ENCODE measurements at regions of chr12 and their contacts with region 1.

Region 1: DNA sequence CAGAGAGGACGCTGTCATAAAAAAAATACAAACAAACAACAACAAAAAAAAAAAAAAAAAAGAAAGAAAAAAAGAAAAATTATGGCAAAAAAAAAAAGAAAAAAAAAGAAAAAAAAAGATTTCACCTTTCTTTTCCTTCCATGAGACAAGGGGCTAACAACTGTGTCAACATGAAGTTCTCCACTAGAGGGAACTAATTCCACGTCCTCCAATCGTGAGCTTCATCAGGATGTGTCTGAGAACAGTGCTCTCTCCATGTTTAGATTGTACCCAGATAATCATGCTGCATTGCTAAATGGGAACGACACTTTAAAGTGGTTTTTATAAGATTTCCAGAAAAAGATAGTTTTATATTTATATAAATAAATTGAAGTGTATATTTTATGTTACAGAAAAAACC is 96.2 kb upstream of the PTPRB start:
- DNase-seq: peak; percentile 80
- H3K4me3 Mint-ChIP-seq: no peak overlapping the region
- H3K27ac Mint-ChIP-seq: no peak overlapping the region
- H3K4me1 Mint-ChIP-seq: no peaks in the 10 kb centered on the region
- H3K27me3 Mint-ChIP-seq: no peaks in the 10 kb centered on the region
- CTCF ChIP-seq: peak; percentile 80

Region 2: DNA sequence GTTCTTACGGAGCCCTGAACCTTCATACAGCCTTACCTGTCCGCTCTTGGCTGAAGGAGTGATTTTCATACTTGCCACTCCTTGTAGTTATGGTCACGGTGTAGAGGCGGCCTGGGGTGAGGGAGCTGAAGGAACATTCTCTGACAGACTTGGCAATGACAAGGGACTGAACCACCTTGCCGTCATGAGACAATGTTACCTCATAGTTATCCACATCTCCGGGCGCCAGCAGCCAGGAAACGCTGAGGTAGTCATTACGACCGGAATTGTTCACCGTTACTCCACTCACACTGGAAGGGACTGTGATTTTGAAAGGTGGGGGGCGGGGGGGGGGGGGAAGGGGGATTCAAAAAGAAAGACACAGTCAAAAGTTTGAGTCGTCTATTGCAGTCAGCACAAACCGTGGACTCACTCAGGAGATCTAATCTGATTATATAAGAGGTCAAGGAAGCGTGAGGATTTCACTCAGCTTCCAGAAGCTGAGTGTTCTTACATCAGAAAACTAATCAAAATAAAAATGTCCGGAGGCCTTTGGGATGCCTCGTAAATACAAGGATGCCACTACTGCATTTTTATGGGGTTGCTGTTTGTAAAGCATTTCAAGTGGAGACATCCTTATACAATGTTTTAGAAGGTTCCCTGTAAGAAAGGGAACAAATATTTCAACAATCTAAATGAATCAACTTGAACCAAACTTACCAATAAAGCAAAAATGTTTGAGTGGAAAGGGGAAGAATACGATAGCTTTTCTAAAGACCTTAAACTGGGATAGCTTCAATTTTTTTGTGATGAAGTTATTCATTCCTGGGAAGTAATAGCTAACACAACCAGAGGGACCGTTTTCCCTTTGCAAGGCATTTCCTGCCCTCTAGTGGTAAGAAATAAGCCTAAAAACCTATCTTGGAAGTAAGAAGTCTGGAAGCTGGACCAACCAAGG is 156.8 kb before region 1 on chr12:
- CTCF ChIA-PET with region 1: interaction called, 18 read pairs
- POLR2A ChIA-PET with region 1: no interaction called
- intact Hi-C with region 1: no loop called
- DNase-seq: peak; percentile 81
- H3K4me3 Mint-ChIP-seq: no peak overlapping the region
- H3K27ac Mint-ChIP-seq: no peak overlapping the region
- H3K4me1 Mint-ChIP-seq: no peaks in the 10 kb centered on the region
- H3K27me3 Mint-ChIP-seq: no peaks in the 10 kb centered on the region
- CTCF ChIP-seq: peak; percentile 76

Region 3: DNA sequence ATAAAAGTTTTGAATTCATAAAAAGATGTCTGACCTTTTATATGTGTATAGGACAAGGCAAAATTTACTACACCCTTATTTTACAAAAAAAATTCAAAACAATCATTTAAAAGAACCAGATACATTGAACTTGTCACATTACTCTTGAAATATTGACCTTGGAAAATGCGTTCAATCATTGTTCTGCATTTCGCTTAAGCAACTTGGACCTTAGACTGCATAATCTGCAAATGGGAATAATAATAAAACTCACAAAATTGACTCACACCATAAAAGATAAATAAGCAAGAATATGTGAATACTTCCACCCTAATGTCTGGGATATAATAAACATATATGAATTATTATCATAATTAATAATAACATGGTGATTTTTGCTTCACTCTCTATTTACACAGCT is 26.8 kb before region 1 on chr12:
- CTCF ChIA-PET with region 1: no interaction called
- POLR2A ChIA-PET with region 1: no interaction called
- intact Hi-C with region 1: no loop called
- DNase-seq: no peak
- H3K4me3 Mint-ChIP-seq: no peak overlapping the region
- H3K27ac Mint-ChIP-seq: no peak overlapping the region
- H3K4me1 Mint-ChIP-seq: no peaks in the 10 kb centered on the region
- H3K27me3 Mint-ChIP-seq: peaks cover 18% of the 10 kb centered on the region
- CTCF ChIP-seq: no peak

Region 4: DNA sequence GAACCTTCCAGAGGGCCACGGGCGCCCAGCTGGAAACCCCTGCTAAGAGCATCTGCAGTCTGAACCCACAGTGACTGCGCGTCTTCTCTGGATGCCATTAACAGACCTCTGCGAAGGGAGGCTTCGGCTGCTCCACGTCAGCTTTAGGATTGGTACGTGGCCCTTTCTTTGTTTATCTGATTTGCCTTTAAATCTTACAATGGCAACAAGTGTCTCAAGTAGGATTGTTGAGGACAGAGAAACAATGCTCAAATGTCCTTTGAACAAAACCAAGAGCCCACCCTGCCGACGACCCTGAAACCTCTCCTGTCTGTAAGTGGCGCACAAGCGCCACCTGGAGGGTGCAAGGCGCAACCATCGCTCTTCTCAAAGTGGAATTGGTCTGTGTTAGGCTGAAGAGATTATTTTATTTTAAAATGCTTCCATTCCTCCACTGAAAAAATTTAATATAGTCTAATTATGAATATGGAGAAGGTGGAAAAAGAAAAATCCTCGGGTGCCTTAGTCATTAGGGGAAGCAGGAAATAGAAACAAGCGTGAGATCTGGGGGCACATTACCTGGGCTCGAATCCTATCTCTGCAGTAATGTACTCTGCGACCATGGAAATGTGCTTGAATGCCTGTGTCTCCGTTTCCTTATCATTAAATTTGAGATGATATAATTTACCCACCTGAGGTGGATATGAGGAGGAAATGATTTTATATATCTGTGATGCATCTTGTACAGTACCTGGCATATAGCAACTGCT is 13.5 kb before region 1 on chr12:
- CTCF ChIA-PET with region 1: interaction called, 21 read pairs
- POLR2A ChIA-PET with region 1: no interaction called
- intact Hi-C with region 1: no loop called
- DNase-seq: peak; percentile 28
- H3K4me3 Mint-ChIP-seq: no peak overlapping the region
- H3K27ac Mint-ChIP-seq: no peak overlapping the region
- H3K4me1 Mint-ChIP-seq: no peaks in the 10 kb centered on the region
- H3K27me3 Mint-ChIP-seq: no peaks in the 10 kb centered on the region
- CTCF ChIP-seq: peak; percentile 92

Region 5: GRCh38 chr12:70837026-70837425 is 103.6 kb after region 1 on chr12:
- CTCF ChIA-PET with region 1: interaction called, 11 read pairs
- POLR2A ChIA-PET with region 1: no interaction called
- intact Hi-C with region 1: no loop called
- DNase-seq: no peak
- H3K4me3 Mint-ChIP-seq: no peak overlapping the region
- H3K27ac Mint-ChIP-seq: no peak overlapping the region
- H3K4me1 Mint-ChIP-seq: peaks cover 4% of the 10 kb centered on the region
- H3K27me3 Mint-ChIP-seq: no peaks in the 10 kb centered on the region
- CTCF ChIP-seq: no peak

Region 6: DNA sequence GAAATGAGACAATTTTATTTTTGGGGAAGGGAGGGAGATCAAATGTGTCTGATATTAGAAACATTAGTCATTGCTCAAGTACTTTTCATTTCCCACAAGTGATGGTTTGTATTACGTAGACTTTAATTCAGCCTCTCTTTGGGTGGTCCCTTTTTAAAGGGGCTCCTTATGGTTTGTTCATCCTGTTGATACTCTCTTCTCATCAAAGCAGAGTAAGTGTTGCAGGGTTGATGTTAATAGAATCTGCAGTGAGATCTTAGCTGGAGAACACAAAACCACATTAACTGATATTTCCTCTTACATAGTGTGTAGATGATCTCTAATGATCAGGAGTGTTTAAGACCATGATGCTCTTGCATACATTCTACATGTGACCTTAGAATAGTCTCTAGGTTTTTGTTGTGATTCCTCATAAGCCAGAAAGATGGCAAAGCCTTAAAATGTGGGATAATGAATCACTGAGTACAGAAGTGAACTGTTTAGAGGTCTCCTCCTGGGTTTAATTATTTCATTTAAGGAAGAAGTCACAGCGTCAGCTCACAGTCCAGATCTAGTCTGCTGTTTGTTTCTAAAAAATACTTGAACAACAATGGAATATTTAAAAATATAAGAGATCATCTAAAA is 274.5 kb after region 1 on chr12:
- CTCF ChIA-PET with region 1: interaction called, 106 read pairs
- POLR2A ChIA-PET with region 1: interaction called, 7 read pairs
- intact Hi-C with region 1: no loop called
- DNase-seq: no peak
- H3K4me3 Mint-ChIP-seq: no peak overlapping the region
- H3K27ac Mint-ChIP-seq: no peak overlapping the region
- H3K4me1 Mint-ChIP-seq: peaks cover 14% of the 10 kb centered on the region
- H3K27me3 Mint-ChIP-seq: no peaks in the 10 kb centered on the region
- CTCF ChIP-seq: no peak

Region 7: GRCh38 chr12:71019282-71019831 is 286.0 kb after region 1 on chr12:
- CTCF ChIA-PET with region 1: interaction called, 106 read pairs
- POLR2A ChIA-PET with region 1: interaction called, 7 read pairs
- intact Hi-C with region 1: loop called (anchors 1 kb)
- DNase-seq: no peak
- H3K4me3 Mint-ChIP-seq: no peak overlapping the region
- H3K27ac Mint-ChIP-seq: no peak overlapping the region
- H3K4me1 Mint-ChIP-seq: peaks cover 5% of the 10 kb centered on the region
- H3K27me3 Mint-ChIP-seq: no peaks in the 10 kb centered on the region
- CTCF ChIP-seq: no peak

Measured in MCF 10A (cell line).